ENCODE measurements at regions of chr22 and their contacts with region 1.

Region 1: GRCh38 chr22:35930933-35931332 is 97.7 kb downstream of the RBFOX2 start:
- DNase-seq: peak; percentile 49
- ATAC-seq: peak; percentile 67
- H3K4me3 ChIP-seq: no peak overlapping the region
- H3K27ac ChIP-seq: no peak overlapping the region
- H3K4me1 ChIP-seq: no peaks in the 10 kb centered on the region
- H3K27me3 ChIP-seq: no peaks in the 10 kb centered on the region
- CTCF ChIP-seq: peak; percentile 62

Region 2: DNA sequence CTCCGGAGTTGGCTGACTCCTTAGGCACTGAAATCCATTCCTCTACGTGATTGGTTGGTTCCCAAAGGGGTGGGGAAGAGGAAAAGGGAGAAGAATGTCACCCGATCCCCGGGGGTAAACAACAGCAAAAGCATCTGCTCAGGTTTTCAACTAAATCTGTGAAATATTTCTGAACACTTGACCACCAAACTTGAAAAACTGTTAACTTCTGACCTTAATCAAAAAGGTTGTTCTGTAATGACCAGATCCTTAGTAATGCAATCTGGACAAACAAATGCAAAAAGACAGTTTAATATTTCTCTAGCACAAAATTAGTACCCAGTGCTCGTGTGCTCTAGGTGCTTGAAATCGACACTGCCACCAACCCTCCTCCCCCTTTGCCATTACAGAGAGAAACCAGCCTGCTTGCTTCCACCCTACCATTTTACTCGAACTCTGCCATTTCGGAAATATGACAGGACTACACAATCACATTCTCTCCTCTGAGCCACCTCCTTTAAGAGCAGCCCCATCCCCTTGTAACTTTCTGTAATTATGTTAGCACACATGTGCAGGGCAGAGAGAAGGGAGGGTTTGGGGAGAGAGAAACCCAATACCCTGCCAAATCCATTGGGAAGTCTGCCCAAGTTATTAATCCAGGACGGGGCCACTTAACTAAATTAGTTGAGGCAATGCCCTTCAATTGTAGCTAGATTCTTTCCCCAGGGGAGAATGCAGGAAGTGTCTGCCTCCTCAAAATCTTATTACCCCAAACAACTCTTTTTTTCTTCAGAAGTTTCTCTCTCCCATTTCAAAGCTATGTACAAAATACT is 16.1 kb before region 1 on chr22:
- CTCF ChIA-PET with region 1: no interaction called
- POLR2A ChIA-PET with region 1: no interaction called
- intact Hi-C with region 1: no loop called
- DNase-seq: peak; percentile 89
- ATAC-seq: peak; percentile 87
- H3K4me3 ChIP-seq: peak overlapping the region; percentile 67
- H3K27ac ChIP-seq: peak overlapping the region; percentile 64
- H3K4me1 ChIP-seq: peaks cover 31% of the 10 kb centered on the region
- H3K27me3 ChIP-seq: no peaks in the 10 kb centered on the region
- CTCF ChIP-seq: no peak

Region 3: GRCh38 chr22:35947794-35948425 is 17.0 kb after region 1 on chr22:
- CTCF ChIA-PET with region 1: no interaction called
- POLR2A ChIA-PET with region 1: interaction called, 16 read pairs
- intact Hi-C with region 1: no loop called
- DNase-seq: peak; percentile 58
- ATAC-seq: peak; percentile 100
- H3K4me3 ChIP-seq: no peak overlapping the region
- H3K27ac ChIP-seq: no peak overlapping the region
- H3K4me1 ChIP-seq: 0 out of 2 replicates have a peak, but pooled peaks cover 3% of the 10 kb centered on the region
- H3K27me3 ChIP-seq: no peaks in the 10 kb centered on the region
- CTCF ChIP-seq: no peak

Region 4: DNA sequence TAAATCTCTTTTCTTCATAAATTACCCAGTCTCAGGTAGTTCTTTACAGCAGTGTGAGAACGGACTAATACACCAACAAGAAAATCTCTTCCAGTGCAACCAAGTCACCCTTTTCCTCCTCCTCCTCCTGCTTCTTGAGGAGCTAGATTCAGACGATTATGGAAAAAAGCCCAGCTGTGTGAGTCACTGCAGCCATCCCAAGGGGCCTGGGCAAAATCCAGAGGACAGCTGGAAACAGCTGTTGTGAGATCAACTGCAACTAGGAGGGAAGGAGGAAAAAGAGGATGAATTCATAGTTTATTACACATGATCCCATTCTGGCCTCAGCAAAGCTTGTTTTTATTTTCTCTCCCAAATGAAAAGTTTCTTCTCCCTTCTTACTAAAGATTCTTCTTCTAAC is 64.8 kb after region 1 on chr22:
- CTCF ChIA-PET with region 1: no interaction called
- POLR2A ChIA-PET with region 1: no interaction called
- intact Hi-C with region 1: no loop called
- DNase-seq: peak; percentile 37
- ATAC-seq: peak; percentile 50; the same call in 1 of the 2 replicates
- H3K4me3 ChIP-seq: no peak overlapping the region
- H3K27ac ChIP-seq: no peak overlapping the region
- H3K4me1 ChIP-seq: no peaks in the 10 kb centered on the region
- H3K27me3 ChIP-seq: no peaks in the 10 kb centered on the region
- CTCF ChIP-seq: no peak

Region 5: GRCh38 chr22:36028646-36029405 is 97.9 kb after region 1 on chr22 and contains the start of gene RBFOX2:
- CTCF ChIA-PET with region 1: interaction called, 3 read pairs
- POLR2A ChIA-PET with region 1: no interaction called
- intact Hi-C with region 1: loop called (anchors 5 kb)
- DNase-seq: peak; percentile 91
- ATAC-seq: peak; percentile 88
- H3K4me3 ChIP-seq: peak within 1 kb of the TSS; percentile 99
- H3K27ac ChIP-seq: no peak within 1 kb of the TSS
- H3K4me1 ChIP-seq: 0 out of 2 replicates have a peak, but pooled peaks cover 13% of the 10 kb centered on the region
- H3K27me3 ChIP-seq: no peaks in the 10 kb centered on the region
- CTCF ChIP-seq: no peak
- total RNA-seq, gene RBFOX2: 75.1 and 82.5 TPM in 2 replicates

Region 6: DNA sequence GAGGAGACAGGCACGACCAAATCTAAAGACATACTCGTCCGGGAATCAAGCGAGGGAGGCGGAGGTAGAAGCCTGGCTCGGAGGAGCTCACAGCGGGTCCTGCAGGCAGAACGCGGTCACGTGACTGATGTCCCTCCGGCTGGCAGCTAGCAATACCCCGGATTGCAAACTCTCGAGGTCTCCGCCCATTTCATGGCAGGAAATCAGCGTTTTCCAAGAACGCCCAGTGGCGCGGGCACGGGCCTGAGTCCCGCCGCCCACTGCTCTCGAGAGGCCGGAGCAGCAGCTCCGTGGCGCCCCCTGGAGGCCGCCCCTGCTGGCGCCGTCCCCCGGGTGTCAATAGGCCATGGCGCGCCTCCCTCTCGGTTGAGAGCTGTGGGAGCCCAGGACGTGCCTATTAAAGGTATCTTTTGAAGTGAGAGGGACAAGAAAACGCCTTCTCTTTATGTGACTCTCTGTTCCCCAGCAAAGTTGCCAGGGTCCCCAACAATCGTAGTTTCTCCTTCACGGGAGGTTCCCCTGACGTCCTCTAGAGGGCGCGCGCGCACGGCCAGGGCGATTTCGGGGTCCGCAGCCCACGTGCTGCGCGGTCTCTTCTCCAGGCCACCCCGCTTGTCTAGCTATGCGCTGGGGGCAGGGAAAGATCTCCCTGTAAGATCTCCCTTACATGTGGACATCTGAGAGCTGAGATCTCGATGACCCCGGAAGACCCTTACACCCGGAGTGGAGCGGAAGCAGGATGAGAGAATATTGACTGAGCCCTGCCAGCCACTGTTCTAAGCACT is 135.0 kb after region 1 on chr22:
- CTCF ChIA-PET with region 1: interaction called, 8 read pairs
- POLR2A ChIA-PET with region 1: no interaction called
- intact Hi-C with region 1: loop called (anchors 5 kb)
- DNase-seq: peak; percentile 90
- ATAC-seq: peak; percentile 85
- H3K4me3 ChIP-seq: peak overlapping the region; percentile 78
- H3K27ac ChIP-seq: no peak overlapping the region
- H3K4me1 ChIP-seq: peaks cover 6% of the 10 kb centered on the region
- H3K27me3 ChIP-seq: no peaks in the 10 kb centered on the region
- CTCF ChIP-seq: peak; percentile 99

Region 7: GRCh38 chr22:36123673-36124630 is 193.0 kb after region 1 on chr22:
- CTCF ChIA-PET with region 1: no interaction called
- POLR2A ChIA-PET with region 1: no interaction called
- intact Hi-C with region 1: loop called (anchors 1 kb)
- DNase-seq: peak; percentile 92
- ATAC-seq: peak; percentile 97
- H3K4me3 ChIP-seq: peak overlapping the region; percentile 43; the same call in 1 of the 2 replicates
- H3K27ac ChIP-seq: 0 out of 2 replicates have a peak overlapping the region, but pooled peaks have one; percentile 32
- H3K4me1 ChIP-seq: peaks cover 4% of the 10 kb centered on the region; the same call in 1 of the 2 replicates
- H3K27me3 ChIP-seq: no peaks in the 10 kb centered on the region
- CTCF ChIP-seq: peak; percentile 91